Panc1 (cell line): ENCODE measurements at regions of chr11 and their contacts with region 1.

Region 1: DNA sequence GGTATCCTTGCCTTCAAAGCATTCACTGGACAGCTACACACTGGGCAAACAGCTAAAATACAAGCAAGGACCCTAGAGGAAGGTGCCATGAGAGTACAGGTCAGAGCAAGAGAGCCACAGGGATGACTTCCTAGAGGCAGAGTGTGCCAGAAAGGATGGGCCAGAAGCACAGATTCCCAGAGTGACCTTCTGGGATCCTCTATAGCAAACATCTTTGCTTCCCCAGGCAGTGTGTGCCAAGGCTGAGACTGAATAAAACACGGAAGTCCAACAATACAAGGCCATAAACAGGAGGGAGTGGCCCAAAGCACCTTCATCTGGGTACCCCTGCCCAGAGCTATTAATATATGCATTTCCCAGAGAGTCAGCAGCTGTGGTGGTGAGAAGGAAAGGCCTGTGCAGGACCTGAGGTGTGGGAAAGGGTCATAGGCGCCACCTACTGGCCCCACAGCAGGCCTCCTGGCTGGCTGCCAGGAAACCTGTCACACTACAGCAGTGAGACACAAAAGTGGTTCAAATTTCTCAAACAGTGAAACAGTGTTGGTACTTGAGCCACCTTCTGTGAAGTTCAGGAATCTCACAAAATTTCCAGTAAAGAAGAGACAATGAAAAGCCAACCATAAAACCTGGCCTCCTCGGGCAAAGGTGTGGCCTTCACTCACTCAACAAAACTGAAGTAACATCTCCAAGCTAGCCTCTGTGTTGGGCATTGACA is 20.3 kb downstream of the CLPB start:
- DNase-seq: peak; percentile 57
- ATAC-seq: peak; percentile 88
- H3K4me3 ChIP-seq: no peak overlapping the region
- H3K27ac ChIP-seq: no peak overlapping the region
- H3K4me1 ChIP-seq: no peaks in the 10 kb centered on the region
- H3K27me3 ChIP-seq: no peaks in the 10 kb centered on the region
- CTCF ChIP-seq: peak; percentile 96

Region 2: DNA sequence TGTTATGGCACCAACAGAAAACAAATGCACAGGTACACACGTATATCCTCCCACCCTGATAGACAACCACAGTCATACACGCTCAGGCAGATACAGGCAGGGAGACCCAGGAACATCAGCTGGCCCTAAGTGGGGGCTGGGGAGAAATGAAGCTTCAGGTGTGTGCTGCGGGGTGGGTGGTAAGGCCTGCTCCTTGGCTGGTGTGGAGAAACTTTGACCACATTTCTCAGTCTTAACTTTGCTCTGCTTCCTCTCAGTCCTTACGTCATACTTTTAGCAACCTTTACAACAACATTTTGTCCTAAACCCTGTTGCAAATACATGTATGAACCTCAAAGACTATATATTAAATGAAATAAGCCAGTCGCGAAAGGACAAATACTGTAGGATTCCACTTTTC is 294.9 kb before region 1 on chr11:
- CTCF ChIA-PET with region 1: interaction called, 10 read pairs
- POLR2A ChIA-PET with region 1: interaction called, 3 read pairs
- in situ Hi-C with region 1: no loop called
- intact Hi-C with region 1: no loop called
- DNase-seq: no peak
- ATAC-seq: no peak
- H3K4me3 ChIP-seq: no peak overlapping the region
- H3K27ac ChIP-seq: no peak overlapping the region
- H3K4me1 ChIP-seq: no peaks in the 10 kb centered on the region
- H3K27me3 ChIP-seq: no peaks in the 10 kb centered on the region
- CTCF ChIP-seq: no peak

Region 3: DNA sequence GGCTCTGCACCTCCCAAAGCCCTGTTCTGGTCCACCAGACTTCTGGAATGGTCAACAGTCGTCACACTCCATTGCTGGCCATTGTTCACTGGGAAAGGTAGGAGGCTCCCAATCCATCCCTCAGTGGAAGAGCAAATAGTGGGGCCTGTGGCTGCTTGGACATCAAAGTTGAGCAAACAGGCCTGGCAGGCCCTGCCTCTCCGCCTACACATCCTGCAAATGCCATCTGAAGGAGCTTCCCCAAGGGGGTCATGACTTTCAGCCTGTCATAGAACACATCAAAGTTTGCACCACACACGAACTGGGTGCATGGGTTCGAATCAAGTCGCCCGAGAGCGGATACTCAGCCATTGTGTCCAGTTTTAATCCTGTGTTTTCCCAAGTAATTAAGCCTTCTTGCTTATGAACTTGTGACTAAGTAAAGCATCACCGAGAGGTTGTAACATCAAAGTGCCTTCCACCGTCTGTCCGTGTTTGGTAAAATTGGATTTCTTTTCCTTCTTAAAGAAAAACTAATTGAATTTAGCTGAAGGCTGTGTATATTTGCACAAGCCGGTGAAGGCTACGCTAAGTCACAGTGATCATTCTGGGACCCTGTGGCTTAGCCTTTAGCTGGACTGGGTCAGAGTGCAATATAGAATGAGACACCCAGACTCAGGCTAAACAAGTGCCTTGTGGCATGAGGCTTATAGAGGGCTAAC is 15.9 kb before region 1 on chr11:
- CTCF ChIA-PET with region 1: no interaction called
- POLR2A ChIA-PET with region 1: no interaction called
- in situ Hi-C with region 1: no loop called
- intact Hi-C with region 1: no loop called
- DNase-seq: no peak
- ATAC-seq: peak; percentile 60; the same call in 1 of the 2 replicates
- H3K4me3 ChIP-seq: no peak overlapping the region
- H3K27ac ChIP-seq: no peak overlapping the region
- H3K4me1 ChIP-seq: no peaks in the 10 kb centered on the region
- H3K27me3 ChIP-seq: no peaks in the 10 kb centered on the region
- CTCF ChIP-seq: no peak

Region 4: GRCh38 chr11:72430741-72431570 is 16.9 kb after region 1 on chr11:
- CTCF ChIA-PET with region 1: interaction called, 18 read pairs
- POLR2A ChIA-PET with region 1: no interaction called
- in situ Hi-C with region 1: no loop called
- intact Hi-C with region 1: no loop called
- DNase-seq: no peak
- ATAC-seq: 0 out of 2 replicates have a peak, but pooled peaks have one; percentile 36
- H3K4me3 ChIP-seq: no peak overlapping the region
- H3K27ac ChIP-seq: no peak overlapping the region
- H3K4me1 ChIP-seq: peaks cover 5% of the 10 kb centered on the region
- H3K27me3 ChIP-seq: no peaks in the 10 kb centered on the region
- CTCF ChIP-seq: peak; percentile 93

Region 5: GRCh38 chr11:72493426-72494108 is 79.5 kb after region 1 on chr11:
- CTCF ChIA-PET with region 1: no interaction called
- POLR2A ChIA-PET with region 1: no interaction called
- in situ Hi-C with region 1: no loop called
- intact Hi-C with region 1: no loop called
- DNase-seq: no peak
- ATAC-seq: no peak
- H3K4me3 ChIP-seq: no peak overlapping the region
- H3K27ac ChIP-seq: no peak overlapping the region
- H3K4me1 ChIP-seq: no peaks in the 10 kb centered on the region
- H3K27me3 ChIP-seq: peaks cover 13% of the 10 kb centered on the region
- CTCF ChIP-seq: no peak